Activated CD4-positive, alpha-beta T cell treated with anti-CD3 and anti-CD28 coated beads, Interleukin-2, amount 10 ng/mL, durations not matched to agents 24 days and 14 days (primary cell): ENCODE measurements at regions of chr16 and their contacts with region 1.

Region 1: GRCh38 chr16:67993189-67994039 is 5.9 kb downstream of the DPEP2 start:
- DNase-seq: peak; percentile 95
- H3K4me3 Mint-ChIP-seq: peak overlapping the region; percentile 86
- H3K27ac Mint-ChIP-seq: peak overlapping the region; percentile 96
- H3K4me1 Mint-ChIP-seq: peaks cover 29% of the 10 kb centered on the region
- H3K27me3 Mint-ChIP-seq: no peaks in the 10 kb centered on the region

Region 2: DNA sequence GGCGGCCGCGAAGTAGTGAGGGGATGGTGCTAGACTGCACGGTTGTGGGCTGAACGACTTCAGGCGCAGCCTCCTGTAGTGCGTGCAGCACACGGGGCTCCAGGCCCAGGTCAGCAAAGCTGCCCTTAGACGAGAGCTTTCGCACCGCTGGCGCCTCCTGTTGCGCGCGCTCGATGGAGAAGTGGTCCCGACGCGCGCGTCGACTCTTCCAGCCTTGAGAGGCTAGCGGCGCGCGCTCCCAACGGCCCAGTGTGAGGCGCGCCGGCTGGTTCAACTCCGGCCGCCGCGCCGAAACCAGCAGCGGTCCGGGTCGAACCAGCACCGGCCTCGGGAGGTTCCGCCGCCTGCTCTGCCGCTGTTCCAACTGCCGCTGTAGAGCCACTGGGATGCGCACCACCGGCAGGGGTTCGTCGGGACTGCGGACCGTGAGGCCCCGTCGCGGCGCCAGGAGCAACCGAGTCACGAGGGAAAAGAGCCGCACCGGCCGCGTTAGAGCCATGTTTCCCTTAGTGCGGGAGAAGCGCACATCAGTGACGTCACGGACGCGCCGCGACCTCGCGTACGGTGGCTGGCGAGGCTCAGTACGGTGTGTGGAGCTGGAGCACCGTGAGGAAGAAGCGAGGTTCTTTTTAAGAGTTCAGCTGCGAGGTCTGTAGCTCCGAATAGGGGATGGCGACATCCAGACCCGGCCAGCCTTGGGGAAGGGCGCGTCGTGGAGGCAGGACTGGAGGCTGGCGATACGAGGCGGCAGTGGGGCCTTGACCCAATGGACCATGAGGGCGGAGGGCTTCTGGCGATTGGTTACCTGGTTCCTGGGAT is 29.5 kb after region 1 on chr16 and contains the starts of genes DDX28 and DUS2:
- intact Hi-C with region 1: loop called (anchors 2 kb)
- DNase-seq: peak; percentile 99
- H3K4me3 Mint-ChIP-seq: peak within 1 kb of the TSS; percentile 95
- H3K27ac Mint-ChIP-seq: peak within 1 kb of the TSS; percentile 96
- H3K4me1 Mint-ChIP-seq: peaks cover 22% of the 10 kb centered on the region
- H3K27me3 Mint-ChIP-seq: no peaks in the 10 kb centered on the region
- total RNA-seq, gene DDX28: 23.9 and 26.1 TPM in 2 replicates
- total RNA-seq, gene DUS2: 35.3 and 42.6 TPM in 2 replicates

Region 3: GRCh38 chr16:68040507-68041288 is 47.3 kb after region 1 on chr16:
- intact Hi-C with region 1: loop called (anchors 1 kb)
- DNase-seq: peak; percentile 96
- H3K4me3 Mint-ChIP-seq: no peak overlapping the region
- H3K27ac Mint-ChIP-seq: peak overlapping the region; percentile 51
- H3K4me1 Mint-ChIP-seq: peaks cover 16% of the 10 kb centered on the region
- H3K27me3 Mint-ChIP-seq: no peaks in the 10 kb centered on the region

Region 4: GRCh38 chr16:68064791-68065365 is 71.5 kb after region 1 on chr16:
- intact Hi-C with region 1: loop called (anchors 1 kb)
- DNase-seq: peak; percentile 92
- H3K4me3 Mint-ChIP-seq: peak overlapping the region; percentile 32
- H3K27ac Mint-ChIP-seq: peak overlapping the region; percentile 79
- H3K4me1 Mint-ChIP-seq: peaks cover 64% of the 10 kb centered on the region
- H3K27me3 Mint-ChIP-seq: no peaks in the 10 kb centered on the region